ENCODE measurements at regions of chr20 and their contacts with region 1.

Region 1: GRCh38 chr20:5191829-5192569 is 65.2 kb downstream of the CDS2 start:
- DNase-seq: peak; percentile 57
- H3K4me3 Mint-ChIP-seq: no peak overlapping the region
- H3K27ac Mint-ChIP-seq: peak overlapping the region; percentile 65
- H3K4me1 Mint-ChIP-seq: peaks cover 13% of the 10 kb centered on the region
- H3K27me3 Mint-ChIP-seq: no peaks in the 10 kb centered on the region

Region 2: DNA sequence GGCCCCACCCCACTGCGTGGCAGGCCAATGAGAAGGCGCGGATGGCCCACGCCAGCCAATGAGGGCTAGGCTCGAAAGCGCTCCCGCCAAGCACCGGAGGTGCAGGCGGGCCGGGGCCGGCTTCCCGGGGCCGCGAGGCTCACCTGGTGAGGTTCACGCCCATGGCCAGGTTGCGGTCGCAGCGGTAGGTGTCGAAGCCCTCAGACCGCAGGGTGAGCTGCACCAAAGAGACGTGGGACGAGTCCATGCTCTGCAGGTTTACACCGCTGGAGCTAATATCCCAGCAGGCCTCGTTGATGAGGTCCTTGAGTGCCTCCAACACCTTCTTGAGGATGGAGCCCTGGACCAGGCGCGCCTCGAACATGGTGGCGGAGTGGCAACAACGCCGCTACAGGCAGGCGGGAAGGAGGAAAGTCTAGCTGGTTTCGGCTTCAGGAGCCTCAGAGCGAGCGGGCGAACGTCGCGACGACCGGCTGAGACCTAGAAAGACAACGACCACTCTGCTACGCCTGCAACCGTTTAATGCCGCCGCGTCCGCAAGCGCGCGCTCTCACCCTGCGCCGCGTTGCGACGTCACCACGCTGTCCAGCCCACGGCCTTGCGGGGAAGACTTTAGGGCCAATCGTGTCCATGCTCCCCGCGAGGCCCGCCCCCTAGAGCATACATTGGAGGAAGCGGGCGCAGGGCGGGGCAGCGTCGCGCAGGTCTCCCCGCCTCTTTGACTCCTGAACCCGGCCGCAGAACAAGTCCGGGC is 72.4 kb before region 1 on chr20 and contains the start of gene PCNA:
- CTCF ChIA-PET with region 1: interaction called, 108 read pairs
- DNase-seq: peak; percentile 99
- H3K4me3 Mint-ChIP-seq: peak within 1 kb of the TSS; percentile 97
- H3K27ac Mint-ChIP-seq: peak within 1 kb of the TSS; percentile 99
- H3K4me1 Mint-ChIP-seq: peaks cover 78% of the 10 kb centered on the region
- H3K27me3 Mint-ChIP-seq: peaks cover 3% of the 10 kb centered on the region

Region 3: GRCh38 chr20:5168651-5169396 is 23.2 kb before region 1 on chr20:
- CTCF ChIA-PET with region 1: interaction called, 13 read pairs
- DNase-seq: no peak
- H3K4me3 Mint-ChIP-seq: no peak overlapping the region
- H3K27ac Mint-ChIP-seq: peak overlapping the region; percentile 85
- H3K4me1 Mint-ChIP-seq: peaks cover 46% of the 10 kb centered on the region
- H3K27me3 Mint-ChIP-seq: no peaks in the 10 kb centered on the region

Measured in activated naive CD4-positive, alpha-beta T cell treated with anti-CD3 and anti-CD28 coated beads, Interleukin-2, amount 10 ng/mL, durations not matched to agents 7 days and 5 days (primary cell).